CD4-positive, alpha-beta memory T cell (primary cell): ENCODE measurements at regions of chr4 and their contacts with region 1.

Region 1: GRCh38 chr4:48779998-48780742 is at the start of gene FRYL:
- DNase-seq: peak; percentile 98 to 99 (median 99)
- H3K4me3 ChIP-seq: peak within 1 kb of the TSS; percentile 89 to 96
- H3K4me3 Mint-ChIP-seq: peak within 1 kb of the TSS; percentile 90 to 98 (median 94)
- H3K27ac ChIP-seq: peak within 1 kb of the TSS; percentile 78
- H3K27ac Mint-ChIP-seq: peak within 1 kb of the TSS; percentile 83 to 98 (median 93)
- H3K4me1 ChIP-seq: peaks cover 45% of the 10 kb centered on the region
- H3K4me1 Mint-ChIP-seq: peaks cover 27 to 54% (median 40%) of the 10 kb centered on the region in 4 donors
- H3K27me3 ChIP-seq: no peaks in the 10 kb centered on the region
- H3K27me3 Mint-ChIP-seq: no peaks in the 10 kb centered on the region
- total RNA-seq, gene FRYL: 124 to 134 TPM

Region 2: GRCh38 chr4:48127682-48128394 is 652.3 kb before region 1 on chr4:
- CTCF ChIA-PET with region 1: no interaction called
- POLR2A ChIA-PET with region 1: no interaction called
- intact Hi-C with region 1: loop called (anchors 10 kb)
- DNase-seq: peak; percentile 61 to 72 (median 69)
- H3K4me3 ChIP-seq: peak overlapping the region; percentile 0 to 41
- H3K4me3 Mint-ChIP-seq: peak overlapping the region; percentile 71 to 95 (median 84)
- H3K27ac ChIP-seq: peak overlapping the region; percentile 46
- H3K27ac Mint-ChIP-seq: peak overlapping the region; percentile 78 to 96 (median 94)
- H3K4me1 ChIP-seq: peaks cover 89% of the 10 kb centered on the region
- H3K4me1 Mint-ChIP-seq: peaks cover 65 to 98% (median 83%) of the 10 kb centered on the region in 4 donors
- H3K27me3 ChIP-seq: no peaks in the 10 kb centered on the region
- H3K27me3 Mint-ChIP-seq: no peaks in the 10 kb centered on the region

Region 3: GRCh38 chr4:48578132-48578968 is 201.8 kb before region 1 on chr4:
- CTCF ChIA-PET with region 1: interaction called, 19 read pairs
- POLR2A ChIA-PET with region 1: interaction called, 3 read pairs
- intact Hi-C with region 1: loop called (anchors 1 kb)
- DNase-seq: peak; percentile 49 to 62 (median 55)
- H3K4me3 ChIP-seq: no peak overlapping the region
- H3K4me3 Mint-ChIP-seq: no peak overlapping the region
- H3K27ac ChIP-seq: no peak overlapping the region
- H3K27ac Mint-ChIP-seq: peak overlapping the region in 3 of 7 donors; percentile 17 to 39 (median 26)
- H3K4me1 ChIP-seq: no peaks in the 10 kb centered on the region
- H3K4me1 Mint-ChIP-seq: peaks cover 0 to 5% (median 1%) of the 10 kb centered on the region in 4 donors
- H3K27me3 ChIP-seq: no peaks in the 10 kb centered on the region
- H3K27me3 Mint-ChIP-seq: no peaks in the 10 kb centered on the region

Region 4: DNA sequence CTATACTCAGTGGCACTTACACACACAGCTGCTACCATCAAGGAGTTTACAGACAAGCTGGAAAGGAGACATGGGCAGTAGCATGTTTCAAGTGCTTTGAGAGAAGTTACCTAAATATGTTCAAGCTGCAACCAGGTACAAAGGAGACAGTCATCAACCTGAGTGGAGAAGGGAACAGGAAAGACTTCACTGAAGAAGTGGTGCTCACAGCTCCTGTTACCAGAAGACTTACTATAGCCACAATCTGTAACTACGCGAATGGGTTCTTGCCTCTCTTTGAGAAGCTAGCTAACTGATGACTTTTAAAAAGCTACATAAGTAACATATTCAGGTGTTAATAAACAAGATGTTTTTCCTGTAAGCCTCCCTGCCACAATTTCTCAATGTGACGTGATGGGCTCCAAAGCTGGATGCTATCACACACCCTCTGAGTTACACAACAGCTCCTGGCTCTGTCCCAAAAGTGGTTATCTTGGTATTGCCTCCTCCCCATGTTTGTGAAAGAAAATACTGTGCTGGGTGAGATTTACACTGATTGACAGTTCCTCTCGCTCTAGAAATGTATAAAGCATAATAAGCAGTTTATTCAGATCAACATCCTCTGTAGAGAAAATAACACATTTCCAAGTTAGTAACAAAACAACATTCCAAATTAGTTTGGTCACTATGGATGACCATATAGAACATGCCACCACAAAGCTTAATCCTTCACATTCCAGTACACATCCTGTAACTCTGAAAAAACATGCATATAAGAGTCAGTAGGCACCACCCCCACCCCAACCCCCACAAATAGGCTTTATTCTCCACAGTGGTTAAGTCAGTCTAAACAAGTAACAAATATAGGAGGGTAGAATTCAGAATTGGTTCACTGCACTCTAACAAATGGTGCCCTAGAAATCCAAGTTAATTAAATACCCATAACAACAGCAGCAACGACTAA is 81.9 kb before region 1 on chr4:
- CTCF ChIA-PET with region 1: interaction called, 3 read pairs
- POLR2A ChIA-PET with region 1: interaction called, 8 read pairs
- intact Hi-C with region 1: loop called (anchors 2 kb)
- DNase-seq: peak in 2 of 5 donors; percentile 14 to 37
- H3K4me3 ChIP-seq: no peak overlapping the region
- H3K4me3 Mint-ChIP-seq: peak overlapping the region in 3 of 8 donors; percentile 2 to 8 (median 5)
- H3K27ac ChIP-seq: no peak overlapping the region
- H3K27ac Mint-ChIP-seq: peak overlapping the region in 4 of 7 donors; percentile 5 to 53 (median 40)
- H3K4me1 ChIP-seq: peaks cover 40% of the 10 kb centered on the region
- H3K4me1 Mint-ChIP-seq: peaks cover 48 to 76% (median 57%) of the 10 kb centered on the region in 4 donors
- H3K27me3 ChIP-seq: no peaks in the 10 kb centered on the region
- H3K27me3 Mint-ChIP-seq: no peaks in the 10 kb centered on the region

Region 5: GRCh38 chr4:48739560-48740019 is 40.6 kb before region 1 on chr4:
- CTCF ChIA-PET with region 1: interaction called, 3 read pairs
- POLR2A ChIA-PET with region 1: interaction called, 5 read pairs
- intact Hi-C with region 1: loop called (anchors 5 kb)
- DNase-seq: no peak
- H3K4me3 ChIP-seq: no peak overlapping the region
- H3K4me3 Mint-ChIP-seq: peak overlapping the region in 5 of 8 donors; percentile 32 to 54 (median 36)
- H3K27ac ChIP-seq: no peak overlapping the region
- H3K27ac Mint-ChIP-seq: peak overlapping the region; percentile 7 to 89 (median 61)
- H3K4me1 ChIP-seq: peaks cover 73% of the 10 kb centered on the region
- H3K4me1 Mint-ChIP-seq: peaks cover 57 to 84% (median 72%) of the 10 kb centered on the region in 4 donors
- H3K27me3 ChIP-seq: no peaks in the 10 kb centered on the region
- H3K27me3 Mint-ChIP-seq: no peaks in the 10 kb centered on the region

Region 6: DNA sequence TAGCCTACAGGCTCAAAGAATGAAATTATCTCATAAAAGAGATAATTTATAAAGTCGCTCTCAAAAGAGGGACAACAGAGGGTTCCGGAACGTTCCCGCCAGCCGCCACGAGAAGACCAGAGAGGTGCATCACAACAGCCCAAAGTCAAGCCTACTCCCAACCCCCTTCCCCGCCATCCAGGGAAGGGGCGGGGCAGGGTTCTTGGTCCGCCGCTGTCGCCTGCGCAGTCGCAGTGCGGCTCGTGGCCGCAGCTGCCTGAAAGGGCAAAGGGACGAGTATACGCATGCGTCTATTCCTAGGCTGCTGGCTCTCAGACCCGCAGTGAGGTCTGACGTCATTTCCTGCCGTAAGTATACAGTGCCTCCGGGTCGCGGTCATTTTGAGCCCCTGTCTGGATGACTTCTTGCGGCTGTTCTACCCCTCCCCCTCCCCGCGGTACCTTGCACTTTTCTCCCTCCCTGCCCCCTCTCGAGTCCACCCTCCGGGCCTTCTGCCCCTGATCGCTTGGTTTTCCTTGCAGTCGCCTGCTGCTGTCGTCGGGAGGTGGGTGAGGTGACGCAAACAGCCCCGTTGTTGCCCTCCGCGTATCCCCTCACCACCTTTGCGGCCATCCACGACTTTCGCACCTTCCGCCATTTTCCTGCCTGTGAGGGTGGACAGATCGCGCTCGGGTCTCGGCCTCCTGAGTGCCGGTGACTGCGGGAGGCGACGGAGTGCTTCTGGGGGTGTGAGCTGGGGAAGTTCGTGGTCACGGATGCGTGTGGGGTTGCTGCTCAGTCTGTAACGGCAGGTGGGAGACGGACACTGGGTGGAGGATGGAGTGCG is 50.7 kb after region 1 on chr4 and contains the start of gene OCIAD1:
- CTCF ChIA-PET with region 1: interaction called, 6 read pairs
- POLR2A ChIA-PET with region 1: interaction called, 49 read pairs
- intact Hi-C with region 1: loop called (anchors 1 kb)
- DNase-seq: peak; percentile 91 to 99 (median 96)
- H3K4me3 ChIP-seq: peak within 1 kb of the TSS; percentile 92 to 100
- H3K4me3 Mint-ChIP-seq: peak within 1 kb of the TSS; percentile 100
- H3K27ac ChIP-seq: peak within 1 kb of the TSS; percentile 98
- H3K27ac Mint-ChIP-seq: peak within 1 kb of the TSS; percentile 99 to 100 (median 100)
- H3K4me1 ChIP-seq: peaks cover 25% of the 10 kb centered on the region
- H3K4me1 Mint-ChIP-seq: peaks cover 15 to 35% (median 28%) of the 10 kb centered on the region in 4 donors
- H3K27me3 ChIP-seq: no peaks in the 10 kb centered on the region
- H3K27me3 Mint-ChIP-seq: no peaks in the 10 kb centered on the region
- total RNA-seq, gene OCIAD1: 110 to 124 TPM

Region 7: GRCh38 chr4:48963042-48963679 is 183.0 kb after region 1 on chr4:
- CTCF ChIA-PET with region 1: interaction called, 5 read pairs
- POLR2A ChIA-PET with region 1: no interaction called
- intact Hi-C with region 1: loop called (anchors 1 kb)
- DNase-seq: peak; percentile 75 to 79 (median 76)
- H3K4me3 ChIP-seq: no peak overlapping the region
- H3K4me3 Mint-ChIP-seq: no peak overlapping the region
- H3K27ac ChIP-seq: no peak overlapping the region
- H3K27ac Mint-ChIP-seq: no peak overlapping the region
- H3K4me1 ChIP-seq: no peaks in the 10 kb centered on the region
- H3K4me1 Mint-ChIP-seq: no peaks in the 10 kb centered on the region
- H3K27me3 ChIP-seq: no peaks in the 10 kb centered on the region
- H3K27me3 Mint-ChIP-seq: peaks cover 1 to 4% of the 10 kb centered on the region in 2 donors